GM12878 (cell line): ENCODE measurements at regions of chr20 and their contacts with region 1.

Region 1: DNA sequence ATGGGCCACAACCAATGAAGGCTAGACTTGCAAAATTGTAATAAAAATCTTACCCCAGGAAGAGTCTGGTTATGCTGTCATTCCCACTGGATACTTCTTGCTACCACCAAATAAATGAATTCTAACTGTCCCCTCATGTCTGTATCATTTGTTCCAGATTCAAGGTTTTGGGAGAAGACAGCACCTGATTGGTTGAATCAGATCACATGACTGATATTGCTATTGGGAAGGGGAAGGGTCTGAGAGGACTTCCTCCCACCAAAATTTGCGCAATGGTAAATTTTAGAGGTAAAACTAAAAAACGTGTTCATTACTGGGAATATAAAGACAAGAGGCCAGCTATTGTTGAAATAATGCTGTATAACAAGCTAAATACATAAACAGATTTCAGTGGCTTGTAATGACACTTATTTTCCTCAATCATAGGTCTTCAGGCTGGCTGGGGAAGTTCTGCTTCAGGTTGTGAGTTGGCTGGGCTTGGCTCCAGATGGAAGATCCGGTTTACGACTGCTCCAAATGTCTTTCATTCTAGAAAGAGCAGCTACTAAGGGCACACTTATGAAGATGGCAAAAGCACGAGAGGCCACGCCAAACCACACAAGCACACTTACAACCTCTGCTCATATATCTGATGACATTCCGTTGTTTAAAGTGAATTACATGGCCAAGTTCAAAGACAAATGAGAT is 27.1 kb upstream of the TASP1 start:
- DNase-seq: no peak
- ATAC-seq: no peak
- H3K4me3 ChIP-seq: no peak overlapping the region
- H3K27ac ChIP-seq: no peak overlapping the region
- H3K4me1 ChIP-seq: peaks cover 4% of the 10 kb centered on the region
- H3K27me3 ChIP-seq: no peaks in the 10 kb centered on the region; a peak in 1 of 4 replicates
- CTCF ChIP-seq: no peak
- EP300 ChIP-seq: no peak
- POLR2A ChIP-seq: no peak
- RAD21 ChIP-seq: no peak

Region 2: DNA sequence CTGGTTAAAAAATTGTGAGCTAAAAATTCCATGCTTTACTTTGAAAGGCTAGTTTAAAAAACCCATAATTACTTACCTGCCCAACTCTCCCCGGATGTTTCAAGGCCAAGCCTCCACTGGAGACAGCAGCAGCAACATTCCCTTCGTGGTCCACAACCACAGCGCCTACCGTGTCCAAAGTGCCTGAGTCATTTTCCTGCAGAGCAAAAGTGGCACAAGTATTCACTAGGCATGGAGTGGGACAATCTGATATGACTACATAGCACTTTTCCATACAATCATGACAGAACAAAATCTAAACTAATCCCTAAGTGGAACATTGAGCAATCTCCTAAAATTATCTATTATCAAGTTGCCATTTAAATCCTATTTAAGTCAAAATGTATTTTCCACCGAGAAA is 131.9 kb before region 1 on chr20:
- CTCF ChIA-PET with region 1: no interaction called
- POLR2A ChIA-PET with region 1: no interaction called
- RAD21 ChIA-PET with region 1: no interaction called
- SMC1A ChIA-PET with region 1: no interaction called
- in situ Hi-C with region 1: no loop called
- intact Hi-C with region 1: no loop called
- DNase-seq: no peak
- ATAC-seq: no peak
- H3K4me3 ChIP-seq: no peak overlapping the region
- H3K27ac ChIP-seq: no peak overlapping the region
- H3K4me1 ChIP-seq: no peaks in the 10 kb centered on the region
- H3K27me3 ChIP-seq: no peaks in the 10 kb centered on the region
- CTCF ChIP-seq: no peak
- EP300 ChIP-seq: no peak
- POLR2A ChIP-seq: no peak
- RAD21 ChIP-seq: no peak

Region 3: GRCh38 chr20:13625304-13625979 is 40.4 kb before region 1 on chr20:
- CTCF ChIA-PET with region 1: no interaction called
- POLR2A ChIA-PET with region 1: no interaction called
- RAD21 ChIA-PET with region 1: no interaction called
- SMC1A ChIA-PET with region 1: no interaction called
- in situ Hi-C with region 1: no loop called
- intact Hi-C with region 1: loop called (anchors 2 kb)
- DNase-seq: no peak
- ATAC-seq: no peak
- H3K4me3 ChIP-seq: no peak overlapping the region
- H3K27ac ChIP-seq: no peak overlapping the region
- H3K4me1 ChIP-seq: no peaks in the 10 kb centered on the region
- H3K27me3 ChIP-seq: no peaks in the 10 kb centered on the region
- CTCF ChIP-seq: no peak
- EP300 ChIP-seq: no peak
- POLR2A ChIP-seq: no peak
- RAD21 ChIP-seq: no peak

Region 4: DNA sequence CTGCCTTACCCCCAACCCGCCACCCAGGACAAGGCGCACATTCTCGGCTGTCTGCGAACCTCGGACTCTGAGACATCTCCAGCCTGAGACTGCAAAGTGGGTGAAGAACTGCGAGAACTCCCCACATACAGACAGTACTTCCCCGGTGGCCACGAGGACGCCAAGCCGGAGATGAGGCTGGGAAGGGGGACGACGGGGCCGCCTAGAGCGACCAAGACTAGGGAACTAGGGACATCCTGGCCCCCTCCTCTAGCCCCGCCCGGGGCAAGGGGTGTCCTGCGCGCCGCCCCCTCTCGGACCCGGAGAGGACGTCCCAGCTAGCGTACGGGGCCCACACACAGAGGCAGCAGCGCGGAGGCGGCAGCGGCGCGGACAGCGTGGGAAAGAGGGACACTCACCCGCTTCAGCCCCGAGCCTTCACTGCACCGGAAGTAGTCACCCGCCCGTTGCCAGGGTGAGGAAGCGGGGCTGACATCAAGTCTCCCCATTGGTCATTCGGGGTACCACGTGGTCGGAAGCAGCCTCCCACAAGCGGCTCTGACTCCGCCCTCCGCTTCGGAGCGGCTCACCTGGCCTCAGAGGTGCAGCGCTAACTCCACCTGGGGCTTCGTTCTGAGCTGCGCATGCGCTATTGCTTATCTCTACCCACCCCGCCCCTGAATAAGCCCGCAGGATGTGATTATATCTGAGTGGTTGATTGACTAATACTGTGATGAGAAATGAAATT is 27.2 kb before region 1 on chr20 and contains the start of gene TASP1:
- CTCF ChIA-PET with region 1: no interaction called
- POLR2A ChIA-PET with region 1: no interaction called
- RAD21 ChIA-PET with region 1: no interaction called
- SMC1A ChIA-PET with region 1: no interaction called
- in situ Hi-C with region 1: no loop called
- intact Hi-C with region 1: no loop called
- DNase-seq: peak; percentile 84
- ATAC-seq: peak; percentile 100
- H3K4me3 ChIP-seq: peak within 1 kb of the TSS; percentile 90
- H3K27ac ChIP-seq: no peak within 1 kb of the TSS; the same call in 1 of the 2 replicates
- H3K4me1 ChIP-seq: no peaks in the 10 kb centered on the region
- H3K27me3 ChIP-seq: no peaks in the 10 kb centered on the region
- CTCF ChIP-seq: no peak
- EP300 ChIP-seq: no peak
- POLR2A ChIP-seq: peak; percentile 93
- RAD21 ChIP-seq: no peak
- polyA plus RNA-seq, gene TASP1: 12.3 to 17.8 TPM